ENCODE measurements at regions of chr12 and their contacts with region 1.

Region 1: GRCh38 chr12:43221216-43221615 is 330.8 kb downstream of the ADAMTS20 start:
- DNase-seq: no peak
- H3K4me3 ChIP-seq: no peak overlapping the region
- H3K27ac ChIP-seq: no peak overlapping the region
- H3K4me1 ChIP-seq: no peaks in the 10 kb centered on the region
- H3K27me3 ChIP-seq: no peaks in the 10 kb centered on the region
- CTCF ChIP-seq: no peak
- POLR2A ChIP-seq: no peak

Region 2: GRCh38 chr12:43551971-43552559 is 330.8 kb after region 1 on chr12 and contains the start of gene ADAMTS20:
- intact Hi-C with region 1: no loop called
- DNase-seq: no peak
- H3K4me3 ChIP-seq: peak within 1 kb of the TSS in 2 of 3 donors; percentile 15 to 37
- H3K27ac ChIP-seq: no peak within 1 kb of the TSS
- H3K4me1 ChIP-seq: no peaks in the 10 kb centered on the region
- H3K27me3 ChIP-seq: peaks cover 0 to 29% of the 10 kb centered on the region in 2 donors
- CTCF ChIP-seq: no peak
- POLR2A ChIP-seq: no peak
- total RNA-seq, gene ADAMTS20: not detected

Region 3: DNA sequence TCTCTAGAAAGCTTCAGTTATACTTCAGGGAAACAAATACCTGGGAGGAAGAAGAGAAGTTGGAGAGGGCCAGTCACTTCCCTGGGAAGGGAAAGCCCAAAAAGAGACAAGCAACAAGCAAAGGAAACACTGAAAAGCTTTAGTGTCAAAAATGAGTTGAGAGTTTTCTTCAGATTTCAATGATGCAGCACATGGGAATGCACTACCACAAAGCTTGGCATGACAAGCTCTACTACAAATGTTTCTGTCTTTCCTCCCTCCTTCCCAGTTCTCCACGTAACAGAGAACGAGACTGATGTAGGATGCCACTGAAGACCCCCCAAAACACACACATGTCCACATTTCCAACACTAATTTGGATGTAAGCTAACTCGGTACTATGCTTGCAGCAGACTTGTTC is 357.6 kb after region 1 on chr12:
- intact Hi-C with region 1: loop called (anchors 10 kb)
- DNase-seq: no peak
- H3K4me3 ChIP-seq: no peak overlapping the region
- H3K27ac ChIP-seq: no peak overlapping the region
- H3K4me1 ChIP-seq: no peaks in the 10 kb centered on the region
- H3K27me3 ChIP-seq: no peaks in the 10 kb centered on the region
- CTCF ChIP-seq: no peak
- POLR2A ChIP-seq: no peak